PC-9 (cell line): ENCODE measurements at regions of chr12 and their contacts with region 1.

Region 1: DNA sequence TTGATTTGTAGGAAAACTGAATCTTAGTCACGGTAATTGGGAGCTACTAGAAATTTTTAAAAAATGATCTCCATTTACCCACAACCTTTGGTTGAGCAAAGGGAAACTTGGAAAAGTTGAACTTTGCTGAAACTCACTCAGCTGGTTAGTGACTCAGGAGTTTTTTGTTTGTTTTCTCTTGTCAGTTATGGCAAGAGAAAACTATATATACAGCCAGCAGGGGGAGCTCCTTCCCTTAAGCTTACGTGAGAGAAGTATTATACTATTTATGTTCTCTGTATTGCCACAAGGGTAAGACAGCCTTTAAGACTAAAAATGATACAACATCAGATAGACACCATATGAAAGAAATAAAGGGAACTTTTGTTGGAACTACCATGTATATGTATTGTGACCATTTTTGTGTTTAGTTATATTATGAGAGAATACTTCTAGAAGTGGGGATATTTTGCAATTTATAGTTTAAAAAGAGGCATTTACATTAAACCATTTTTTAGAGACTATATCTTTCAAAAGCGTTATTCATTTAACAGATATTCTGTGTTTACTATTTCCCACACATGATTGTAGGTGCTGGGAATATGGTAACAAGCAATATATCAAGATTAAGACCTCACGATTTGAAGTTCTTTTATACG is 28.1 kb upstream of the TBC1D30 start:
- DNase-seq: peak; percentile 70 to 92
- H3K4me3 ChIP-seq: peak overlapping the region; percentile 20; the same call in 1 of the 2 replicates
- H3K27ac ChIP-seq: peak overlapping the region; percentile 84
- H3K4me1 ChIP-seq: peaks cover 33% of the 10 kb centered on the region
- H3K27me3 ChIP-seq: no peaks in the 10 kb centered on the region
- CTCF ChIP-seq: peak; percentile 93

Region 2: DNA sequence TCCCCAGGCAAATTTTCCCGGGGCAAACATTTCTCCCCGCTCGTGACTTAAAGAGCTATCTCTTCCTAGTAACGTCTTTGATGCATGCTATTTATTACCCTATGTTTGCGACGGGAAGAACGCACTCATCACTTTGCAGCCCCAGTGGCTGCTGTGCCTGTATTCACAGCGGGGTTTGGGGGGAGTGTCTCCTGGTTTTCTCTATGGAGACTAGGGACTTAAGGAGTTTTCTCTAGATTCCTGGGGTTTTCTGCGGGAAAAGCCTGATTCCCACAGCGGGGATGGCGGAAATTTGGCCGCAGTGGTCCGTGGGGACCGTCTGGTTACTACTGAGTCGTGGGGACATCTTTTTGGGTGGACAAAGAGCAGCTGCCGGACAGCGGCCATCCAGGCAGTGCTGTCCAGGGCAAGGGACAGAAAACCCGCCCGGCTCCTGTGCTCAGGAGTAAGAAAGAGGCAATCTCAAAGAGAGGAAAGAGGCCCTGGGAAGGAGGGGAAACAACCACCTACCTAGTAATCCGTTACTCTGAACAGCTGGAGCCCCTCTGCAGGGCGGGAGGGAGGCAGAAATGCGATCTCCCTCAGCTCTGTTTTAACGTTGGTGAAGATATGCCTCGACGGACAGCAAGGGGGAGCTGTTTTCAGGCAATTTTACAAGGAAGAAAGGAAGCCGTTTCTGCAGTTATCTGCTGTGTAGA is 1644.6 kb before region 1 on chr12:
- CTCF ChIA-PET with region 1: interaction called, 17 read pairs
- POLR2A ChIA-PET with region 1: no interaction called
- intact Hi-C with region 1: no loop called
- DNase-seq: peak in 1 of 2 experiments; percentile 17
- H3K4me3 ChIP-seq: no peak overlapping the region
- H3K27ac ChIP-seq: no peak overlapping the region
- H3K4me1 ChIP-seq: no peaks in the 10 kb centered on the region
- H3K27me3 ChIP-seq: no peaks in the 10 kb centered on the region
- CTCF ChIP-seq: peak; percentile 73

Region 3: GRCh38 chr12:64236549-64236948 is 559.8 kb before region 1 on chr12:
- CTCF ChIA-PET with region 1: no interaction called
- POLR2A ChIA-PET with region 1: no interaction called
- intact Hi-C with region 1: no loop called
- DNase-seq: no peak
- H3K4me3 ChIP-seq: no peak overlapping the region
- H3K27ac ChIP-seq: no peak overlapping the region
- H3K4me1 ChIP-seq: no peaks in the 10 kb centered on the region
- H3K27me3 ChIP-seq: no peaks in the 10 kb centered on the region
- CTCF ChIP-seq: no peak

Region 4: GRCh38 chr12:64480148-64480547 is 316.2 kb before region 1 on chr12:
- CTCF ChIA-PET with region 1: no interaction called
- POLR2A ChIA-PET with region 1: no interaction called
- intact Hi-C with region 1: no loop called
- DNase-seq: no peak
- H3K4me3 ChIP-seq: no peak overlapping the region
- H3K27ac ChIP-seq: no peak overlapping the region
- H3K4me1 ChIP-seq: no peaks in the 10 kb centered on the region
- H3K27me3 ChIP-seq: no peaks in the 10 kb centered on the region
- CTCF ChIP-seq: no peak

Region 5: GRCh38 chr12:64544371-64545080 is 251.8 kb before region 1 on chr12:
- CTCF ChIA-PET with region 1: no interaction called
- POLR2A ChIA-PET with region 1: no interaction called
- intact Hi-C with region 1: loop called (anchors 10 kb)
- DNase-seq: no peak
- H3K4me3 ChIP-seq: no peak overlapping the region
- H3K27ac ChIP-seq: no peak overlapping the region
- H3K4me1 ChIP-seq: no peaks in the 10 kb centered on the region
- H3K27me3 ChIP-seq: no peaks in the 10 kb centered on the region
- CTCF ChIP-seq: no peak

Region 6: GRCh38 chr12:64571411-64571810 is 224.9 kb before region 1 on chr12:
- CTCF ChIA-PET with region 1: no interaction called
- POLR2A ChIA-PET with region 1: no interaction called
- intact Hi-C with region 1: no loop called
- DNase-seq: no peak
- H3K4me3 ChIP-seq: no peak overlapping the region
- H3K27ac ChIP-seq: no peak overlapping the region
- H3K4me1 ChIP-seq: peaks cover 9% of the 10 kb centered on the region
- H3K27me3 ChIP-seq: no peaks in the 10 kb centered on the region
- CTCF ChIP-seq: no peak

Region 7: DNA sequence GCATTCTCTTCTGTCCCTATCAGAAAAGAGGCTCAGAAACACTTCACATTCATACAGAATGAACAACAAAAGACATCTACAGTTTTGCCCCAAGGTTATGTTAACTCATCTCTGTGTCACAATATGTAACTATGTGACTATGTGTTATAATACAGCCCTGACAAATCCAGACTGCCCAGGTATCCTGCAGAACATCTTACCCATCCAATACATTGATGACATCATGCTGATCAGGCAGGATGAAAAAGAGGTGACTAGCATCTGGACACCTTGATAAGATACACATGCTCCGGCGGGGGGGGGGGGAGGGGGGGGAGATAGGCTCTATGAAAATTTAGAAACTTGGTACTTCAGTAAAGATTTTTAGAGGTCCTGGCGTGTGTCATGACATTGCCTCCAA is 28.8 kb before region 1 on chr12:
- CTCF ChIA-PET with region 1: no interaction called
- POLR2A ChIA-PET with region 1: interaction called, 17 read pairs
- intact Hi-C with region 1: no loop called
- DNase-seq: peak in 1 of 2 experiments; percentile 46
- H3K4me3 ChIP-seq: no peak overlapping the region
- H3K27ac ChIP-seq: no peak overlapping the region
- H3K4me1 ChIP-seq: no peaks in the 10 kb centered on the region
- H3K27me3 ChIP-seq: no peaks in the 10 kb centered on the region
- CTCF ChIP-seq: no peak

Region 8: GRCh38 chr12:65156366-65156841 is 360.1 kb after region 1 on chr12:
- CTCF ChIA-PET with region 1: no interaction called
- POLR2A ChIA-PET with region 1: no interaction called
- intact Hi-C with region 1: no loop called
- DNase-seq: no peak
- H3K4me3 ChIP-seq: no peak overlapping the region
- H3K27ac ChIP-seq: no peak overlapping the region
- H3K4me1 ChIP-seq: peaks cover 6% of the 10 kb centered on the region; the same call in 1 of the 2 replicates
- H3K27me3 ChIP-seq: no peaks in the 10 kb centered on the region
- CTCF ChIP-seq: no peak

Region 9: GRCh38 chr12:65232476-65233077 is 436.2 kb after region 1 on chr12:
- CTCF ChIA-PET with region 1: interaction called, 5 read pairs
- POLR2A ChIA-PET with region 1: no interaction called
- intact Hi-C with region 1: loop called (anchors 5 kb)
- DNase-seq: no peak
- H3K4me3 ChIP-seq: no peak overlapping the region
- H3K27ac ChIP-seq: no peak overlapping the region
- H3K4me1 ChIP-seq: peaks cover 6% of the 10 kb centered on the region; the same call in 1 of the 2 replicates
- H3K27me3 ChIP-seq: no peaks in the 10 kb centered on the region
- CTCF ChIP-seq: peak; percentile 63

Region 10: GRCh38 chr12:65278576-65279368 is 482.4 kb after region 1 on chr12 and contains the start of gene MSRB3:
- CTCF ChIA-PET with region 1: interaction called, 12 read pairs
- POLR2A ChIA-PET with region 1: no interaction called
- intact Hi-C with region 1: loop called (anchors 10 kb)
- DNase-seq: peak in 1 of 2 experiments; percentile 51
- H3K4me3 ChIP-seq: peak within 1 kb of the TSS; percentile 82
- H3K27ac ChIP-seq: no peak within 1 kb of the TSS
- H3K4me1 ChIP-seq: peaks cover 4% of the 10 kb centered on the region; the same call in 1 of the 2 replicates
- H3K27me3 ChIP-seq: peaks cover 18% of the 10 kb centered on the region; the same call in 1 of the 2 replicates
- CTCF ChIP-seq: no peak; the same call in 1 of the 2 replicates
- total RNA-seq, gene MSRB3: 0.55 and 1.2 TPM in 2 replicates